ENCODE measurements at regions of chr5 and their contacts with region 1.

Region 1: GRCh38 chr5:97162045-97162444 is 19.6 kb upstream of the LIX1 start:
- DNase-seq: no peak
- H3K4me3 ChIP-seq: no peak overlapping the region
- H3K27ac ChIP-seq: no peak overlapping the region
- H3K4me1 ChIP-seq: no peaks in the 10 kb centered on the region
- H3K27me3 ChIP-seq: no peaks in the 10 kb centered on the region
- CTCF ChIP-seq: peak; percentile 94

Region 2: DNA sequence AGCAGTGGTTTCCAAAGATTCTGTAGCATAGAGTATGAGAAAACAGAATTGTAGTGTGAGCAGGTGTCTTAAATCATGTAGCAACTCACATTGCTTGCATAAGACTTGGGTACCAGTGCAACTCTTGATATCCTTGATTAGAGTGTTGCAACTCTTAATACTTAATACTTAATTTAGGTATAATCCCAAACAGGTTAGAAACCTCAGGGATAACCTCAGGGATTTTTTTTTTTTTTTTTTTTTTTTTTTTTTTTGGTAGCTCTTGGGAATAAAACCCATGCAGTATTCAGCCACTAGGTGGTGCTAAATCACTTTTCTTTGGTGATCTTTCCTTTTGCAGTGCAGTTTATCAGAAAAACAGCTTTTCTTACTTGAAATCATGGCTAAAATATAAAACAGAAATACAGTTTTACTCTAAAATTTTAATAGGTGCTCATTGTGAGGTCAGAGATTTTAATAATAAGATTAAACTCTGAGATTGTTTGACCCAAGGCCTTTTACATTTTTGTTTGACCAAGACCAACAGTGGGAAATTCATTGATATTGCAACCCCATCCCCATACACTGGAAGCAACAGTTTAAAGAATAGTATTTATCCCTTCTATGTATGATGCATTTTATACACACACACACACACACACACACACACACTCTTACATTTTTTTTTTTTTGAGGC is 409.6 kb before region 1 on chr5:
- intact Hi-C with region 1: loop called (anchors 10 kb)
- DNase-seq: no peak
- H3K4me3 ChIP-seq: no peak overlapping the region
- H3K27ac ChIP-seq: peak overlapping the region; percentile 65
- H3K4me1 ChIP-seq: peaks cover 62% of the 10 kb centered on the region
- H3K27me3 ChIP-seq: no peaks in the 10 kb centered on the region
- CTCF ChIP-seq: peak; percentile 74

Region 3: DNA sequence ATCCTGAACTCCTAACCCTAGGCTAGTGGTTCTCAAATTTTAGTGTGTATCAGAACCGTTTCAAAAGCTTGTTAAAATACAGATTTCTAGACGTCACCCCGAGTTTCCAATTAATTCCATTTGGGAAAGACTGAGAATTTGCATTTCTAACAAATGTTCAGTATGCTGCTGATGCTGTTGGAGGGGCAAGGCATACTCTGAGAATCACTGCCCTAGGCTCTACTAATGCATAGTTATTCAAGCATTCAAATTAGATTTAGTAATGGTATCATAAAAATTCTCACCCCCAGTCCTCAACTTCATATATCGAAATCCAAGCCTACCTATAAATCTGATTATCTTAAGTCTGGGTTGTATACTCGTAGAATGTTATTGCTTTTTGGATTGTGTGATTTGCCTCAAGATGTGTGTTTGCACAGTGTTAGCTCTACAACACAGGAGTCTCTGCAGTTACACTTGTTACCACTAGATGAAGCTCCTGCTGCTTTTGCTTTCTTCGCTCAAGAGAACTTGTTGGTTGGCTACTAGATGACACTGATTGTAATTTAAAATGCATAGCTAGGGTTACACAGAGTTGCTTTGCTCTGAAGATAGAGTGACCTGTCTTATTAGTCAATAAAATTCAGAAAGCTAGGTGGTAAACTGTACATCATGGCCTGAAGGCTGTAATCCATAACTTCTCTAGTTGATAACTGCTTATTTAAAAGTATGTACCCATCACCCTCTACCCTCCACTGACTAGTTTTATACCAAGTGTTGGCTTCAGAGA is 293.3 kb before region 1 on chr5:
- intact Hi-C with region 1: loop called (anchors 5 kb)
- DNase-seq: no peak
- H3K4me3 ChIP-seq: no peak overlapping the region
- H3K27ac ChIP-seq: no peak overlapping the region
- H3K4me1 ChIP-seq: no peaks in the 10 kb centered on the region
- H3K27me3 ChIP-seq: no peaks in the 10 kb centered on the region
- CTCF ChIP-seq: peak; percentile 95